GM10248 (cell line): ENCODE measurements at regions of chr17 and their contacts with region 1.

Region 1: DNA sequence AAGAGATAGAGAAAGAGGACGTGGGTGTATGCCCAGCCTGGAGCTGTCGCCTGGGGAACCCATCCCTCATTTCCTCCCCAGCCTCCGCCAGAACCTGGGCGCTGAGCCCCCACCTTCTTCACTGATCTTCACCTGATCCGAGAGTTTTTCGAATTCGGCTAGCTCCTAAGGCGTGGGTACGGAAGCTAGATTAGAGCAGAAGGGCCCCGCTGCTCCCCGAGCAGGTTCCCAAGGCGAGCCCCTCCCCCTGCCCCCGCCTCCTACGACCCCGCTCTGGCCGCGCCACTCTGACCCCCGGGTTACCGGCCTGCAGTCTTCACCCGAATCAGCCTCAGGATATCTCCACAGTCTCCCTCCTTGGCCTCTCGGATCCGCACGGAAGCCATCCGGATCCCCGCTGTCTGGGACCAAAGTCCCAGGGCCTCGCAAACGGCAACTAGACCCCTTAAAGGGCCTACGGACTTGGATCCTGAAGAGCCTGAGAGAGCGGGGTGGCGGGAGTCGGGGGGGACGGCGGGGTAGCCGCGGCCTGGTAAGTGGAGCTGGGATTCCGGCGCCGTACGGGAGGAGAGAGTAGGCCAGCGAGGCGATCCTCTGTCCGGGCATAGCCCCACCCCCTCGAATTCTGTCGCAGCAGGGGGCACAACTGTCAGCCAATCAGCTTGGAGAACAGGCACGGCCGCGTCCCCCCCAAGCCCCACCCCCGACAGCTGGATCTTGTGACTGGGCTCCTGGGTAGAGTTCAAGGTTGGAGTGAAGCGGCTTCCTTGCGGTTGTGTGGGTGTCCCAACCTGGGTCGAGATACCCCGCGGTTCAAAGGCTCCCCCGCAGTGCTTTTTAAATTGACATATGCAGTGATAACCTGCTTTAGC is at the start of gene SAT2:
- DNase-seq: peak; percentile 99
- CTCF ChIP-seq: no peak

Region 2: DNA sequence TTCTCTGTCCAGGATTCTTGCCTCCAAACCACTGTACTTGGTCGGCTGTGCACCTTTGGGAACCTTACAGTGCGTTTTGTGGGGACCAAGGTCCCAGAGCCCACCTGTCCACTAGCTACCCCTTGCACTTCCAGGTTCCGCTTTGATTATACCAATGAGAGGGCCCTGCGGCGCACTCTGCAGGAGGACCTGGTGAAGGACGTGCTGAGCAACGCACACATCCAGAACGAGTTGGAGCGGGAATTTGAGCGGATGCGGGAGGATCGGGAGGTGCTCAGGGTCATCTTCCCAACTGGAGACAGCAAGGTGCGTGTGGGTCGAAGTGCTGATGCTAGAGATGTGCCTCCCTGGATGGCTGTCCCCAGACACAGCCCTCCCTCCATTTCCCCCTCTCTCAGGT is 124.5 kb before region 1 on chr17:
- CTCF ChIA-PET with region 1: no interaction called
- POLR2A ChIA-PET with region 1: interaction called, 16 read pairs
- DNase-seq: no peak
- CTCF ChIP-seq: peak; percentile 11

Region 3: GRCh38 chr17:7614422-7615264 is 12.8 kb before region 1 on chr17 and contains the start of gene FXR2:
- CTCF ChIA-PET with region 1: interaction called, 68 read pairs
- POLR2A ChIA-PET with region 1: interaction called, 4 read pairs
- DNase-seq: peak; percentile 99
- CTCF ChIP-seq: peak; percentile 57

Region 4: DNA sequence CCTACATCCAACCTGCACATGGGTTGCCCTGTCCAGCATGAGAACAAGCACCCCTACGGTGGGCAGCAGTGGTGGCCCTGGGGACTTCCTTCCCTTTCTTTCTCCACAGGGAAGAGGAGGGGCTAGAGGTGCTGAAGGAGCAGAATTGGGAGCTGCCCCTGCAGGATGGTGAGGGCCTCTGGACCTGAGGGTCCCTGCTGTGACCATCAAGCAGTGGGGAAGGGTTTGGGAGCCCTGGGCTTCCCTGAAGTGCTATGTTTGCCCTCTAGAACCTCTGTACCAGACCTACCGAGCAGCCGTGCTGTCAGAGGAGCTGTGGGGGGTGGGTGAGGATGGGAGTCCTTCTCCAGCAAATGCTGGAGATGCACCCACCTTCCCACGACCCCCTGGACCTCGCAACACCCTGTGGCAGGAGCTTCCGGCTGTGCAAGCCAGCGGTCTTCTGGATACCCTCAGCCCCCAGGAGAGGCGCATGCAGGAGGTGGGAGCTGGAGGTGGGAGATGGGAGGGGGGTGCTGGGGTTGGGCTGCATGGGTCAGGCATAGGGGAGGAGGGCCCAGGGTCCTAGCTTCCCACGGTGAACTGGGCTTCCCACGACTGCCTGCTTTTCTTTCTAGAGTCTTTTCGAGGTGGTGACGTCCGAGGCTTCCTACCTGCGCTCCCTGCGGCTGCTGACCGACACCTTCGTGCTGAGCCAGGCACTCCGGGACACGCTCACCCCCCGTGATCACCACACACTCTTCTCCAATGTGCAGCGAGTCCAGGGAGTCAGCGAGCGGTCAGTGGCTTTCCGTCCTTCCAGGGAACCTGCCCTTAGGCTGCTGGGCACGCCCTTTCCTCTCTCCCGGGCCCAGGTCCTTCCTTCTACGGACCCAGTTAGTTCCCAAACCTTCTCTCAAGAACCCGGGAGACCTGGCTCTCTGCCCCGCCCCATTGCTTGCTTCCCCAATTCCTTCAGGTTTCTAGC is 687.6 kb after region 1 on chr17:
- CTCF ChIA-PET with region 1: no interaction called
- POLR2A ChIA-PET with region 1: no interaction called
- DNase-seq: no peak
- CTCF ChIP-seq: no peak